ENCODE measurements at regions of chr12 and their contacts with region 1.

Region 1: DNA sequence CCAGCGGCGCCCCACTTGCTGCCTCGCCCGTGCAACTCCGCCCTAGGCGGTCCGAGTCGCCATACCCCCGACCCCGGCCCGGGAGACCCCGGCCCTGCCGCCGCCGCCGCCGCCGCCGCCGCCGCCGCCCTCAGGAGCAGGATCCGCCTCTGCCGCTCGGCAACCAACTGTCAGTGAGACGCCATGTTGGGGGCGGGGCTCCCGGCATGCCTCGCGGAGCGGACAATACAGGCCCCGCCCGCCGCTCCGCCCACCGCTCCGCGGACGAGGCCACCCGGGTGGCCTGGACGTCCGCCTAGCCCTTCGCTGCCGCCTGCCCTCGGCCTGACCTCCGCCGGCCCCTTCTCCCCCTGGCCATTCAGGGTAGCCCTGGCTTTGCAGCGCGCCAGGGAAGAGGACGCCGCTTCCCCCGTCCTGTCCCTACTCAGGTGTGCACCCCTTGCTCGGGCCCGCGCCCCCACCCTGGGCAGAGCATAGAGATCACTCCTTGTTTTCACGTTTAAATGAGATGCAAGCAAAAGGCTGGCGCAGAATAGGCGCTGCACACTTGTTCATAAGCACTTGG is at the start of gene HECTD4:
- DNase-seq: peak; percentile 83 to 97 (median 88)
- ATAC-seq: peak; percentile 100
- H3K4me3 ChIP-seq: peak within 1 kb of the TSS; percentile 81
- H3K4me3 Mint-ChIP-seq: peak within 1 kb of the TSS; percentile 92 to 99 (median 95)
- H3K27ac ChIP-seq: peak within 1 kb of the TSS; percentile 76
- H3K27ac Mint-ChIP-seq: peak within 1 kb of the TSS; percentile 81 to 96 (median 91)
- H3K4me1 ChIP-seq: peaks cover 6 to 15% of the 10 kb centered on the region in 2 donors
- H3K4me1 Mint-ChIP-seq: peaks cover 11 to 32% (median 28%) of the 10 kb centered on the region in 7 donors
- H3K27me3 ChIP-seq: no peaks in the 10 kb centered on the region
- H3K27me3 Mint-ChIP-seq: peaks cover 0 to 2% (median under 1%) of the 10 kb centered on the region in 5 donors
- total RNA-seq, gene HECTD4: 44.9 to 57.7 (median 51.4) TPM

Region 2: DNA sequence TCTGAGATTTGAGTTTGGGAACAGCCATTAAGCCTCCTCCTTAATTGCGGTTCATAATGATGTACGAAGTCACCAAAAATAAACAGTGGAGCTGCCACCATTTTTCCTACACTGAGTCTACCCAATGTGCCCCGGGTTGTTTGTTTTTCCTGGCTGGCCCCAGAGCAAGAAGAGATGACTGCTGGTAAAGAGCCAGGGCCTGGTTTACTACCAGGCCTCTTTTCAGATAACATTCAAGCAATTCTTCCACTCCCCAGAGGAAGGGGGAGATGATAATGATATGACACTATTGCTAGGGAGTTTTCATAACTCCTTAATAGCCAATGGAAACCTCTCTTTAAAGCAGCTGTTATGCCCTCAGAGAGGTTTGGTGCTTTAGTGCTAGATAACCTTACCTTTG is 738.9 kb before region 1 on chr12:
- CTCF ChIA-PET with region 1: no interaction called
- POLR2A ChIA-PET with region 1: no interaction called
- intact Hi-C with region 1: no loop called
- DNase-seq: no peak
- ATAC-seq: no peak
- H3K4me3 ChIP-seq: no peak overlapping the region
- H3K4me3 Mint-ChIP-seq: no peak overlapping the region
- H3K27ac ChIP-seq: no peak overlapping the region
- H3K27ac Mint-ChIP-seq: no peak overlapping the region
- H3K4me1 ChIP-seq: no peaks in the 10 kb centered on the region
- H3K4me1 Mint-ChIP-seq: peaks cover 0 to 3% (median 0%) of the 10 kb centered on the region in 7 donors
- H3K27me3 ChIP-seq: no peaks in the 10 kb centered on the region
- H3K27me3 Mint-ChIP-seq: no peaks in the 10 kb centered on the region

Region 3: GRCh38 chr12:111819191-111820150 is 562.8 kb before region 1 on chr12:
- CTCF ChIA-PET with region 1: no interaction called
- POLR2A ChIA-PET with region 1: no interaction called
- intact Hi-C with region 1: loop called (anchors 1 to 2 kb)
- DNase-seq: no peak
- ATAC-seq: no peak
- H3K4me3 ChIP-seq: no peak overlapping the region
- H3K4me3 Mint-ChIP-seq: no peak overlapping the region
- H3K27ac ChIP-seq: no peak overlapping the region
- H3K27ac Mint-ChIP-seq: peak overlapping the region in 1 of 9 donors; percentile 40
- H3K4me1 ChIP-seq: no peaks in the 10 kb centered on the region
- H3K4me1 Mint-ChIP-seq: peaks cover 0 to 2% (median 0%) of the 10 kb centered on the region in 7 donors
- H3K27me3 ChIP-seq: no peaks in the 10 kb centered on the region
- H3K27me3 Mint-ChIP-seq: peaks cover 4 to 47% (median 13%) of the 10 kb centered on the region in 5 donors

Region 4: DNA sequence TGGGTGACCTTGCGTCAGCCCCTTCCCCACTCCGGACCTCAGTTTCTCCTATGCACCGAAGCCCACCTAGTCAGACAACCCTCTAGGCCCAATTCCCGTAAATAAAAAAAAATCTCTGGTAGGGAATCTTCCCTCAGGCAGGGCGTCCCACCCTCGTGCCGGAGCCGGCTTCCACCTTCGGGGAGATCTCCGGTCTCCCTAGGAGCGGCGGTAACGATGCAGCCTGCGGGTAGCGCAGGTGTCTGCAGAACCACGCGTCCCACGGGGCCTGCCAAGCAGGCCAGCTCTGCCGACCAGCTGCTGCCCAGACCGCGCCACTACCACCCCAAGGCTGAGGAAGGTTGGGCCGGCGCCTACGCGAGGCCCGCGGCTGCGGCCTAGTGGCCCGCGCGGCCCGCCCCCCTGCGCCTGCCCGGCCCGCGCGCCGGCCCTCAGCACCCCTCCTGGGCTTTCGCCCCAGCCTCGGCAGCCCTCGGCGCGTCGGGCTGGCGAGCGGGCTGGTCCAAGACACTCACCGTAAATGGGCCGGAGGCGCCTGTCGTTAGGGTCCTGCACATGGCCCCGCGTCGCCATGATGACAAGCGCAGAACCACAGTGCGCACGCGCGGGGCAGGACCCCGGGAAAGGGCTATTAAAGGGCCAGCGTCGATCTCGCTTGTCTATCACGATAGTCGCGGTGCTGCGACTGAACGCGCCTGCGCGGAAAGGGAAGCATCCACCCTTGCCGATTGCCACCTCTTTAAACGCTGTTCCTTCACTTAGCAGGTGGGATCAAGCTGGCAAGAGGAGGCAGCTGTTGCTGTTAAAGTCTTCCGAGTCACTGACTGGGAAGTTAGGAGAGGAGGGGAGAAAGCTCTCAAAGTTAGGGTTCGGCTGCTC is 273.9 kb before region 1 on chr12 and contains the start of gene NAA25:
- CTCF ChIA-PET with region 1: no interaction called
- POLR2A ChIA-PET with region 1: interaction called, 3 read pairs
- intact Hi-C with region 1: loop called (anchors 1 kb)
- DNase-seq: peak; percentile 79 to 90 (median 86)
- ATAC-seq: peak; percentile 92
- H3K4me3 ChIP-seq: peak within 1 kb of the TSS; percentile 100
- H3K4me3 Mint-ChIP-seq: peak within 1 kb of the TSS; percentile 96 to 99 (median 98)
- H3K27ac ChIP-seq: peak within 1 kb of the TSS; percentile 92
- H3K27ac Mint-ChIP-seq: peak within 1 kb of the TSS; percentile 93 to 98 (median 97)
- H3K4me1 ChIP-seq: peaks cover 12 to 22% of the 10 kb centered on the region in 2 donors
- H3K4me1 Mint-ChIP-seq: peaks cover 27 to 53% (median 45%) of the 10 kb centered on the region in 7 donors
- H3K27me3 ChIP-seq: no peaks in the 10 kb centered on the region
- H3K27me3 Mint-ChIP-seq: no peaks in the 10 kb centered on the region
- total RNA-seq, gene NAA25: 39.1 to 43.0 (median 42.1) TPM

Region 5: DNA sequence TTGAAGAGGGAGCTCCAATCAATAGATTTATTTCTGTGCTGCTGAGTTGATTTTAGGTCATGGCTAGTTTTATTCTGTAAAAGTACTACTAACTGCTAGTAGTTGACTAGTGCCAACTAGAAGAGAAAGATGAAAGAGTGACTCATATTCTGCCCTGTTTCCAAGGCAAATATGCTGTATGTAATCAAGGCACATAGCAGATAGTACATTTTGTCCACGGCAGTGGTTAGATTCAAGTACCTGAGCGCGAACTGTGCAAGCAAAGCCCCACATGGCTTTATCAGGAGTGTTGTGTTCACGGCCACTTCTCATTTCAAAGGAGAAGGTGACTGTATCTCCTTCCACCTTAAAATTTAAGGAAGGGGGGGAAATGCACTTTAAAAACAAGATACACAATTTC is 130.1 kb before region 1 on chr12:
- CTCF ChIA-PET with region 1: interaction called, 3 read pairs
- POLR2A ChIA-PET with region 1: no interaction called
- intact Hi-C with region 1: loop called in 1 of 2 experiments (anchors 5 kb)
- DNase-seq: no peak
- ATAC-seq: no peak
- H3K4me3 ChIP-seq: no peak overlapping the region
- H3K4me3 Mint-ChIP-seq: no peak overlapping the region
- H3K27ac ChIP-seq: no peak overlapping the region
- H3K27ac Mint-ChIP-seq: peak overlapping the region in 1 of 9 donors; percentile 45
- H3K4me1 ChIP-seq: no peaks in the 10 kb centered on the region
- H3K4me1 Mint-ChIP-seq: no peaks in the 10 kb centered on the region
- H3K27me3 ChIP-seq: no peaks in the 10 kb centered on the region
- H3K27me3 Mint-ChIP-seq: no peaks in the 10 kb centered on the region

Region 6: DNA sequence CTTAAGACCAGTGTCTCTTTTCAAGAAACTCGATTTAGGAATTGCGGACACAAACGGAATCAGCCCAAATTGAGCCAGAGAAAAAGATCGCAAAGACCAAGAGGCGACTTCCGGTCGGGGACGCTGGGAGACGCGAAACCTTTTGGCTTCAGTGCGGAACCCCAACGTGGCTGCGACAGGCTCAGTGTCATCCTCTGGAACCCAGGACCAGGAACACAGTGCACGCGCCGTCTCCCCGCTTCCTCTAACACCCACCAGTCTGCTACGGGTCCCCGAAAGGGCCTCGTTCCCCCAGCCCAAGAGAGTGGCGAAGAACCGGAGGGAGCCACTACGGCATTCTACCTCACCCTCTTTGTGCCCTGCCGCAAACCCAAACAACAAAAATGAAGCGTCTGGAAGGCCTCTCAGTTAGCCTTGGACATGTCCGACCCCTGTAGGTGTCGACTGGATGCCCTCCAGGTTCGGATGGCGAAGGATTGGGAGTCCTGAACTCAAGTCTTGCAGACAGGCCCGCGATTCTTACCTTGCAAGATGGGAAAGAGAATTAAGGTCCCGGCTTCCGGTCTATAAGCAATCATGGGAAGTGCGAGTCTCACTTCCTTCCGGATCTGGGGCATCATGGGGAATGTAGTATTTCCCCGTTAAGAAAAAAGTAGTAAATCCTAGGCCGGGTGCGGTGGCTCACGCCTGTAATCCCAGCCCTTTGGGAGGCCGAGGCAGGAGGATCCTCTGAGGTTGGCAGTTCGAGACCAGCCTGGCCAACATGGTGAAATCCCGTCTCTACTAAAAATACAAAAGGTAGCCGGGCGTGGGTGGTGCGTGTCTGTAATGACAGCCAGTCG is 27.0 kb after region 1 on chr12 and contains the start of gene RPL6:
- CTCF ChIA-PET with region 1: interaction called, 3 read pairs
- POLR2A ChIA-PET with region 1: interaction called, 3 read pairs
- intact Hi-C with region 1: loop called (anchors 1 kb)
- DNase-seq: peak; percentile 61 to 88 (median 84)
- ATAC-seq: peak; percentile 94
- H3K4me3 ChIP-seq: peak within 1 kb of the TSS; percentile 93
- H3K4me3 Mint-ChIP-seq: peak within 1 kb of the TSS; percentile 97 to 100 (median 100)
- H3K27ac ChIP-seq: peak within 1 kb of the TSS; percentile 84
- H3K27ac Mint-ChIP-seq: peak within 1 kb of the TSS; percentile 99 to 100 (median 100)
- H3K4me1 ChIP-seq: peaks cover 18 to 20% of the 10 kb centered on the region in 2 donors
- H3K4me1 Mint-ChIP-seq: peaks cover 17 to 48% (median 36%) of the 10 kb centered on the region in 7 donors
- H3K27me3 ChIP-seq: no peaks in the 10 kb centered on the region
- H3K27me3 Mint-ChIP-seq: no peaks in the 10 kb centered on the region
- total RNA-seq, gene RPL6: 1,134 to 1,668 (median 1,601) TPM

Measured in naive thymus-derived CD4-positive, alpha-beta T cell (primary cell).